CD8-positive, alpha-beta memory T cell (primary cell): ENCODE measurements at regions of chr11 and their contacts with region 1.

Region 1: DNA sequence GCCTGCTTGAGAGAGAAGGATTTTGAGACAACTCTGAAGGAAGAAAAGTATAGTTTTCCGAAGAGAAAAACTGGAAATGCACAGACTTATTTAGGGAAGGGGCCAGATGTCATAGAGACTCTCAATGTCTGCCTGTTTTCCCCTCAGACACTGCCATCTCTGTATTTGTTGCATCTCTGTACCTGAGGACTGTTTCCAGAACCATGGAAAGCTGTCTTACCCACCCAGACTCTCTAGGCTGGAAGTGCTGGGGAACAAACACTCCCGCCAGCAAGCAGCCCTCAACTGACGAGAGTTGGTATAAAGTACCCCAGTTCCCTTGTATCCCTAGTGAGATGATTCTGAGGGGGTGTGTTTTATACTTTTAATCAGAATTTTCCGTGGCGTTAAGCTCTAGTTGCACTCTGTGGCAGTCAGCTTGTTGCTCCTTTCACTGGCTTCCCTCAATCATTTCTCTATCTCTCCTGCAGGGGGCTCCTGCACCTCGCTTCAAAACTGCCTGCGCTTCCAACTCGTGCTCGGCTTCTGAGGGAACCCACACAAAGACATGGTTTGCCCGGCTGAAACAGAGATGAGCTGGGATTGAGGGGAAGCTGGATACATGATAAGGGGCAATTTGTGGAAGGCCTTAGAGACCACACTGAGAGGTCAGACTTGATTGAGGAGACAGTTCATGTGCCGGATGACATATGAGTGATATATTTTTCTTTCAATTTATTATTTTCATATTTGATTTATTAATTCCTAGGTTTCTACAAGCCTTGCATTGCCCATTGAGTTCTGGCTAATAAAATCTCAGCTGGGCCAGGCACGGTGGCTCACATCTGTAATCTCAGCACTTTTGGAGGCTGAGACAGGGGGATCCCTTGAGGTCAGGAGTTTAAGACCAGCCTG is 36.9 kb upstream of the CLPB start:
- DNase-seq: peak; percentile 34 to 66 (median 53)
- H3K4me3 ChIP-seq: no peak overlapping the region
- H3K4me3 Mint-ChIP-seq: peak overlapping the region in 3 of 7 donors; percentile 40 to 66 (median 48)
- H3K27ac ChIP-seq: no peak overlapping the region
- H3K27ac Mint-ChIP-seq: peak overlapping the region in 2 of 8 donors; percentile 47 to 52
- H3K4me1 ChIP-seq: no peaks in the 10 kb centered on the region
- H3K4me1 Mint-ChIP-seq: peaks cover 3 to 6% (median 4%) of the 10 kb centered on the region in 3 donors
- H3K27me3 ChIP-seq: peaks cover 9% of the 10 kb centered on the region
- H3K27me3 Mint-ChIP-seq: peaks cover 18 to 32% of the 10 kb centered on the region in 2 donors

Region 2: DNA sequence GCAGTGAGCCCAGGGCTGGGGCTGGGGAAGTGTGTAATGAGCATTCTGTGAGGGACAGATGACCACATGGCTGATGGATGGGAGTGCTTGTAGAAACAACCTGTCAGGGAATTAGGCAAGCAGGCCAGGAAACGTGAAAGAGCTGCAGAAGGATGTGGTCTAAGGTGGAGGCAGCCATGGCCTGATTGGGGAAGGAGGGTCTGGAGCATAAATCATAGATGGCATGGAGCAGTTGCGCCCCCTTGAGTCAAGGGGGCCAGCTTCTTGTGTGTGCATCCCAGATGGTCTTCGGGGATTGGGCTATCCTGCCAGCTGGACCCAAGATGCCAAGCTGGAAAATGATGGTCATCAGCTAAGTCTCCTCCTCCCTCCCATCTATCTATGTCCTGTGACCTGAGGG is 82.5 kb after region 1 on chr11:
- CTCF ChIA-PET with region 1: interaction called, 22 read pairs
- POLR2A ChIA-PET with region 1: no interaction called
- DNase-seq: peak in 3 of 5 donors; percentile 17 to 32 (median 31)
- H3K4me3 ChIP-seq: no peak overlapping the region
- H3K4me3 Mint-ChIP-seq: peak overlapping the region in 1 of 7 donors; percentile 24
- H3K27ac ChIP-seq: no peak overlapping the region
- H3K27ac Mint-ChIP-seq: peak overlapping the region in 1 of 8 donors; percentile 37
- H3K4me1 ChIP-seq: no peaks in the 10 kb centered on the region
- H3K4me1 Mint-ChIP-seq: peaks cover 10 to 20% (median 16%) of the 10 kb centered on the region in 3 donors
- H3K27me3 ChIP-seq: no peaks in the 10 kb centered on the region
- H3K27me3 Mint-ChIP-seq: peaks cover 5 to 14% of the 10 kb centered on the region in 2 donors

Region 3: DNA sequence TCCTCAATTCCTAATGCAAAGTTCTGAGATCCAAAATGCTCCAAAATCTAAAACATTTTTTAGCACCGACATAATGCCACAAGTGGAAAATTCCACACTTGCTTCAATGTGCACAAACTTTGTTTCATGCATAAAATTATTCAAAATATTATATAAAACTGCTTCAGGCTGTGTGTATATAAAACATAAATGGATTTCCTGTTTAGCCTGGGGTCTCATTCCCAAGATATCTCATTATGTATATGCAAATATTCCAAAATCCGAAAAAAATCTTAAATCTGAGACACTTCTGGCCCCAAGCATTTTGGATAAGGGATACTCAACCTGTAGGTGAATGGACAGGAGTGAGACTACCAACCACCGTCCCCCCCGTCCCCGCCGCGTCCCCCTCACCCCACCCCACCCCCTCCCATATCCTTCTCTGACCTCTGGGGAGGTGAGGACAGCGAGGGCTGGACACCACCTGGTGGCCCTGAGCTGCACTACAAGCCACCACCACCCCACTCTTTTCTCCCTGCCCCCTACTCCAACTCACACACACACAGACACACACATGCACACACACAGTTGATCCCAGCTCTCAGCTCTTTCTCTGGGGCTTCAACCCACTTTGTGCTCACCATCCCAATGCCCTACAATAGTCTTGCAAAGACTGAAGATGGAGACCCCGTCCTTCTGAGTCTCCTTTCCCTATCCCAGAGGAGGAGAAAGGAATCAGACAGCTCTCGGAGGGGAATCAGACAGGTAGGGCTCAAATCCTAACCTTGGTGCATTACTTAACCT is 102.0 kb after region 1 on chr11:
- CTCF ChIA-PET with region 1: interaction called, 11 read pairs
- POLR2A ChIA-PET with region 1: no interaction called
- DNase-seq: no peak
- H3K4me3 ChIP-seq: no peak overlapping the region
- H3K4me3 Mint-ChIP-seq: no peak overlapping the region
- H3K27ac ChIP-seq: no peak overlapping the region
- H3K27ac Mint-ChIP-seq: peak overlapping the region in 2 of 8 donors; percentile 30 to 55
- H3K4me1 ChIP-seq: no peaks in the 10 kb centered on the region
- H3K4me1 Mint-ChIP-seq: peaks cover 9 to 16% (median 12%) of the 10 kb centered on the region in 3 donors
- H3K27me3 ChIP-seq: no peaks in the 10 kb centered on the region
- H3K27me3 Mint-ChIP-seq: peaks cover 14 to 34% of the 10 kb centered on the region in 2 donors

Region 4: DNA sequence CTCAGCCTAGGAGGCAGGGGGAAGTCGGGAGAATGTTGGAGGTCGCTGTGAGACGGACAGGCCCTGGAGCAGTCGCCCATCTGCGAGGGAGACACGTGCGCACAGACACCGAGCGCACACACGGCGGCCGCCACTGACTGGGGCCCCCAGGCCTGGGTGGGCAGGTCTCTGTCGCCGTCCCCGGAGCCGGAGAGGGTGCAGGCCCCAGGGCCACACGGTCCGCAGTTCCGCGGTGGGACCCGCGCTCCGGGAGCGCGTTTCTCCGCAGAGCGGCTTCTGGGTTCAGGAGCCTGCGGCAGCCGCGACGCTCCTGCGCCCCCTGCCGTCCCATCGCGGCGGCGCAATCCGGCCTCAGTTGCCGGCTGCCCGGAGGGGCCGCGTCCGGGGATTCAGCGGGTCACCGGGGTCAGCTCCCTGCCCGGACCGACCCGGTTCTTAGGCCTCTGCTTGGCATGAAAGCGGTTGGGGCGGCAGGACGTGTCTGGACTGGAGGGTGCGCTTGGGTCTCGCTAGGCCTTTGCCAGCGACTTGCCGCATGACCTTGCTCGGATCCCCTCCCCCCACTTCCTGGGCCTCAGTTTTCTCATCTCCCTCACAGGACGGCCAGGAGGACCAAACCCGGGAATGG is 171.7 kb after region 1 on chr11:
- CTCF ChIA-PET with region 1: interaction called, 23 read pairs
- POLR2A ChIA-PET with region 1: no interaction called
- DNase-seq: peak; percentile 48 to 69 (median 60)
- H3K4me3 ChIP-seq: peak overlapping the region; percentile 55
- H3K4me3 Mint-ChIP-seq: peak overlapping the region in 6 of 7 donors; percentile 21 to 84 (median 69)
- H3K27ac ChIP-seq: no peak overlapping the region
- H3K27ac Mint-ChIP-seq: no peak overlapping the region
- H3K4me1 ChIP-seq: peaks cover 5% of the 10 kb centered on the region
- H3K4me1 Mint-ChIP-seq: no peaks in the 10 kb centered on the region
- H3K27me3 ChIP-seq: peaks cover 23% of the 10 kb centered on the region
- H3K27me3 Mint-ChIP-seq: peaks cover 0 to 4% of the 10 kb centered on the region in 2 donors

Region 5: DNA sequence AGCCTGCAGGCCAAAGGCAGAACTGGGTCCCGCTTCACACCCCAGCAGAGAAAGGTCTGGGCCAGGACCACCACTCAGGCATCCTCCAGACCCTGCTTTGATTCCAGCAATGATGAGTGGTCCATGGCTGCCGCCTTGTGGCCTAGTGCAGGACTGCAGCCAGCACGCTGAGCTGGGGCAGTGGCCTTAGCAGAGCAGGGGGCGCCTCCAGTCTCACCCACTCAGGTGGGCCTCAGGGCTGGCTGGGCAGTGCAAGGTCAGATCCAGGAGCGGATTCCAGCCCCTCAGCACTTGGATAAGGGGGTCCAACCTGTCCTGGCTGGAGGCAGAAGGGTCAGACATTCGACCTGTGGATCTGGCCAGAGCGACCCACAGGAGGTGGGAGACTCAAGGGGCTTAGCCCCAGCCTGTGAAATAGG is 212.5 kb after region 1 on chr11:
- CTCF ChIA-PET with region 1: interaction called, 17 read pairs
- POLR2A ChIA-PET with region 1: no interaction called
- DNase-seq: peak; percentile 43 to 71 (median 46)
- H3K4me3 ChIP-seq: no peak overlapping the region
- H3K4me3 Mint-ChIP-seq: no peak overlapping the region
- H3K27ac ChIP-seq: no peak overlapping the region
- H3K27ac Mint-ChIP-seq: peak overlapping the region in 3 of 8 donors; percentile 19 to 51 (median 42)
- H3K4me1 ChIP-seq: no peaks in the 10 kb centered on the region
- H3K4me1 Mint-ChIP-seq: peaks cover 17 to 25% (median 21%) of the 10 kb centered on the region in 3 donors
- H3K27me3 ChIP-seq: no peaks in the 10 kb centered on the region
- H3K27me3 Mint-ChIP-seq: no peaks in the 10 kb centered on the region